Breast epithelium (tissue), 4 donors: ENCODE measurements at regions of chr6 and their contacts with region 1.

Region 1: DNA sequence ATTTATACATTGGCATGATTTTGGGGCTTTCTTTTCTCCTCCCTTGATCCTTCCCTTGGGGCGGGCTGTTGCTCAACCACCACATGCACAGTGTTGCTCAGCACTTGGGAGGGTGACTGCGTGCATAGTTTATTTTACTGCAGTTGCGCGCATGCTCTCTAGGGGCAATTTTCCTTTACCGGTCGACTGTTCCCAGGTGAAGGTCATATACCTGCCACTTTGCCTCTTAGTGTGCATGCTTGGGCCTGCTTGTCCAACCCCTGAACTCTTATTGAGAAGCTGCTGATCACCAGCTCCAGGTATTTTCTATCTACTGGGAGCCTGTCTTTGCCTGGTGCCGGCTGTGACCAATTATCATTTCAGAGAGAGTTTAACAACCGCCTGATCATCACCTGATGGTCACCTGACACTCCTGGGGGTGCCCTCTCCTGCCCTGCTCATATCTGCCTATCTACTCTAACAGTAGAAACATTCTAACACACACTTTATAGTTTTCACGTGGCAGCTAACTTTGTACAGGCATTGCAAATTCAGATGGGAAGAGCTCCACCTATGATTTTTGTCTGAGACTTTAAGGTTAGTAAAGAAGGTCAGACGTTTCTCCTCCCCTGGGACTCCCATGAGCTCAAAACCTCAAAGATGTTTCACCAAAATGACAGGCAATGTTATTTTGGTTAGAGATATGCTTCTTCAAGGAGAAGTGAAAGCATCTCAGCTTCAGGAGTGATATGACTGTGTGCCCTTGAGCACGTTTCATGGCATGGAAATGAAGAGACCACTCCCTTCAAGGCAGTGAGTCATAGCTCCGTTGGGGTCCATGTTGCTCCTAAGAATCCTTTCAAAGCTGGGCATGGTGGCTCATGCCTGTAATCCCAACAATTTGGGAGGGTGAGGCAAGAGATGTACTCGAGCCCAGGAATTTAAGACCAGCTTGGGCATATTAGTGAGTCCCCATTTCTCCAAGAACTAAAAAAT is 227.5 kb upstream of the MYLIP start:
- DNase-seq: no peak
- H3K4me3 ChIP-seq: no peak overlapping the region
- H3K27ac ChIP-seq: no peak overlapping the region
- H3K4me1 ChIP-seq: no peaks in the 10 kb centered on the region
- H3K27me3 ChIP-seq: no peaks in the 10 kb centered on the region
- CTCF ChIP-seq: no peak
- POLR2A ChIP-seq: no peak

Region 2: DNA sequence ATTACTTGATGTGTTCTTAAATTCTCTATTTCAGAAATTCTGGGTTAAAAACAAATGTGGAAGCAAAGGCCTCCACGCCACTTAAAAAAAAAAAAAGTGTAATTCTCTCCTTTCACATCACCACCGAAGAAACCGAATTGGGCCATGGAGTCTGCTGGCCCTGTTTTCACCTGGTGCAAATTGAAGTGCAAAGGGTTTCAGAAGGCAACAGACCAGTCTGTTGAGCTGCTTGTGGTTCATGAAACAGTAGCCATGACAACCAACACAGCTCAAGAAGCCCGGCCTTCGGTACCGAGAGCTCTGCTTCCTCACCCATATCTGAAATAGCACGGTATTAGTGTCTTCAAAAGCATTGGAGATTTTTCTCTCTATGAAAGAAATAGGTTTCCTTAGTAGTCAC is 400.1 kb after region 1 on chr6:
- intact Hi-C with region 1: loop called (anchors 5 kb)
- DNase-seq: no peak
- H3K4me3 ChIP-seq: no peak overlapping the region
- H3K27ac ChIP-seq: no peak overlapping the region
- H3K4me1 ChIP-seq: no peaks in the 10 kb centered on the region
- H3K27me3 ChIP-seq: no peaks in the 10 kb centered on the region
- CTCF ChIP-seq: no peak
- POLR2A ChIP-seq: no peak

Region 3: DNA sequence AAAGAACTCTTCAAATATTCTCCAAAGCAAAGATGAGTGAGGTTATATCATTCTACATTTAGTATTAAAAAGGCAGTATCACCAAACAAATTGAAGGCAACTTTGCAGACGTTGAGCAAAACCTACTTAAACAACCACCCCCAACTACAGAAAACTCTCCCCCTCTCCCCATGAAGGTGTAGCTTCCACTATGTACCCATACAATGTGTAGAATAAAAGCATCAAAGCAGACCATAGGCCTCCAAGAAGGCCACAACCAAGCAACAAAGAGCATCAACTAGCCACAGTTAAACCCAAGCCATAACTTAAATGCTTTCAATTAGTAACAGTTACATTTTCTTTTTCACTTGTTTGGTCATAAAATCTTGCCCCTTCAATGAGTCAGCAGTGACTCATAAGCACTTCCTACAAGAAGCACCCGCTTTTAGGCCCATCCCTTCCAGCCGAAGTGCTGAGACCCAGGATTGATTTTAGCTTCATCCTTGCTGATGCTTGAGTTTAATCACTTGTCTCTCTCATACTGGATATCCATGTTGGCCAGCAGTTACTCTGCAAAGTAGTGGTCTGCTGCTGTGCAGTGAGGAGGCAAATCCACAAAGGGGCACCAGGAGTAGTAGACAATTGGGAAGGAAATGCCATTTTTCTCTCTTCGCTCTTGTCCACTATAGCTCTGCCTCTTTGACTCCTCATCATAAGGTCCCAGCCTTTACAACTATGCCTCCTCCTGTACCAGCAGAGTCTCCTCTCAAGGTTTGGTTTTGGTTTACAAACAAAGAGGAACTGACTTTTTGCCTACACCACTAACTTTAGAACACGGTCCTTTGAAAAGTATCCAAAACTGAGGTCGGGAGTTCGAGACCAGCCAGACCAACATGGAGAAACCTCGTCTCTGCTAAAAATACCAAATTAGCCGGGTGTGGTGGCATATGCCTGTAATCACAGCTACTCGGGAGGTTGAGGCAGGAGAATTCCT is 1813.7 kb after region 1 on chr6:
- intact Hi-C with region 1: loop called (anchors 10 kb)
- DNase-seq: no peak
- H3K4me3 ChIP-seq: no peak overlapping the region
- H3K27ac ChIP-seq: no peak overlapping the region
- H3K4me1 ChIP-seq: no peaks in the 10 kb centered on the region
- H3K27me3 ChIP-seq: no peaks in the 10 kb centered on the region
- CTCF ChIP-seq: no peak
- POLR2A ChIP-seq: no peak